Ascending aorta (tissue), 2 donors: ENCODE measurements at regions of chr11 and their contacts with region 1.

Region 1: DNA sequence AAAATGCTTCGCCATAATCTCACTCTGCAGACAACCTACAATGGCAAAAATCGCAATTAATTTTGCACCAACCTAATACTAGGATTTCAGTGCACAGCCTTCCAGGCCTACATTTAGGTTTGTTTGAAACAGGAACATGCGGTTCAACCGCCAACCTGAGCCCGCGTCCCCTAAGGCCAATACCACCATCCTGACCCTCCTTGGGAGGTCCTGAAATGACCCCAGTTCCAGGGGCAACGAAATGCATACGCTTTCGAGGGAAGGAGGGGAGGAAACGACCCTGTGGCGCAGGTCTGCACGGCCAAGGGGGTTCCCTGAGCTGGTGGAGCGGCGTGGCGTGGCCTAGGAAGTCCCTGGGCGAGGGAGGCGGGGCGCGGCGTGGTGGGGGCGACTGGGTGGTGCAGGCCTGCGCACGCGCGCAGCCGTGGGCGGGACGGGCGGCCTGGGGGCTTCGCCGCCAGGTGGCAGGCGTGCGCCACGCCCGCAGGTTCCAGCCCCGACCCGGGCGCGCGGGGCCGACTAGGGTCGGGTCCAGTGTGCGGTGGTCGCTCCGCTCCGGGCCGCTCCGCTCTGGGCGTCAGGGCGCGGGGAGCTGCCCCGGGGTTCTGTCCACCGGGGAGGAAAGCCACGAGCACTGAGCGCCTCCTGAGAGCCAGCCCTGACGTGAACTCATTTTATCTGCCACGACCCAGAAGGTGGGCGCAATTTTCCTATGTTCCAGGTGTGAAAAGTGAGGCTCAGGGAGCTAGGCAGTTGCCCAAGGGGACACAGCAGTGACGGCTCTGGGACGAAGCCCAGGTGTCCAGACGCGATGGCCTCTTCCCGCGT is 94.1 kb downstream of the SWAP70 start:
- DNase-seq: peak; percentile 50 to 91
- H3K4me3 ChIP-seq: peak overlapping the region; percentile 70 to 74
- H3K27ac ChIP-seq: peak overlapping the region; percentile 88 to 94
- H3K4me1 ChIP-seq: peaks cover 13 to 23% of the 10 kb centered on the region in 2 donors
- H3K27me3 ChIP-seq: no peaks in the 10 kb centered on the region
- CTCF ChIP-seq: peak in 2 of 3 experiments; percentile 51 to 99

Region 2: DNA sequence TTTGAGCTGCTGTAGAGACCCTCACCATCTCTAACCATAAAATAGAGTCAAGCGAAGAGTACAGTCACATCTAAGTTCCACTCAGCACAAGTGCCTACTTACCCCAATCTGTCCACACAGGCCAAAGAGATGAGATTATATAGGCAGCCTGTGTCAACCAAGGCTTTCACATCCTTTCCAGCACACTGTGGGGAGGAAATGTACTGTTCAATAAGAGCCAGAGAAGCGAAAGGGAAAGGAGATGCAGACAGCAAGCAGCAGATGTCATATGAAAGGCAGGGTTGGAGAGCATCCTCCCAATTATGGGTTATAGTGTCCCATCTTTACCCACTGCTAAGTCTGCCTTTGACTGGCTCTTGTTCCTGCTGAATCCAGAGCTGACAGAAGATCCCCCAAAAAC is 770.6 kb before region 1 on chr11:
- intact Hi-C with region 1: no loop called
- DNase-seq: no peak
- H3K4me3 ChIP-seq: no peak overlapping the region
- H3K27ac ChIP-seq: no peak overlapping the region
- H3K4me1 ChIP-seq: peaks cover 0 to 3% of the 10 kb centered on the region in 2 donors
- H3K27me3 ChIP-seq: no peaks in the 10 kb centered on the region
- CTCF ChIP-seq: no peak

Region 3: DNA sequence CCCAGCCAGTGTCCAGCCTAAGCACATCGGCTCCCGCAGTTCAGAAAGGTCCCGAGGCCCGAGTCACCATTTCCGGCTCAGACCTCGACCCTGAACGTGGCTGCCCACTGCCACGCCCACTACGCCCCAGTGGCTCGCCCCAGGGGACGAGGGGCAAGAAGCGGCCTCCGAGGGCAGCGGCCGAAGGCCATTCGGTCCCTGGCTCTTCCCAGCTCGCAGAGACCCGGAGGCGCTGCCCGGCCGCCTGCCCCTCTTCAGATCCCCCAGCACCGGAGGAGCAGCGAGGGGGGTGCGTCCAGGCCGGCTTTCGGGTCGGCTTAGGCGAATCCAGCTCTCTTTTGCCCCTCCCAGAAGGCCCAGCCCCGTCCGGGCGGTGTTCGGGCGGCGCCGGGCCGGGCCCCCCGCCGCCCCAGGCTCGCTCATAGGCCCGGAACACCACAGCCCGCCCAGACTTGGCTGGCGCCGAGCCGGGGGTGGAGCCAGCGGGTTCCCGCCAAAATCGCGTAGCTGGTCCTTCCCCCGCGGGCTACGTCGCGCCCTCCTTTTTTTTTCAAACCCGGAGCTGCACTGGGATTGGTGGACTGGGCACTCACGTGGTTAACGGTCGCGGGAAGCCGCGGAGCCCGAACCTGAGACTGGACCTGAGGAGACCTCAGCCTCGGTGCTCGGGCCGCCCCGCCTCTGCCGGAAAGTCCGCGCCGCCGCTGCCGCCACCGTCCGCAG is 184.8 kb before region 1 on chr11 and contains the start of gene WEE1:
- intact Hi-C with region 1: loop called (anchors 5 kb)
- DNase-seq: peak; percentile 95 to 99
- H3K4me3 ChIP-seq: peak within 1 kb of the TSS; percentile 89 to 98
- H3K27ac ChIP-seq: peak within 1 kb of the TSS; percentile 93 to 98
- H3K4me1 ChIP-seq: peaks cover 16 to 27% of the 10 kb centered on the region in 2 donors
- H3K27me3 ChIP-seq: no peaks in the 10 kb centered on the region
- CTCF ChIP-seq: no peak
- total RNA-seq, gene WEE1: 20.8 TPM

Region 4: GRCh38 chr11:9802291-9802861 is 44.4 kb after region 1 on chr11:
- intact Hi-C with region 1: loop called (anchors 1 kb)
- DNase-seq: no peak
- H3K4me3 ChIP-seq: no peak overlapping the region
- H3K27ac ChIP-seq: peak overlapping the region; percentile 54 to 76
- H3K4me1 ChIP-seq: peaks cover 3 to 40% of the 10 kb centered on the region in 2 donors
- H3K27me3 ChIP-seq: no peaks in the 10 kb centered on the region
- CTCF ChIP-seq: no peak

Region 5: GRCh38 chr11:9972989-9973388 is 215.0 kb after region 1 on chr11:
- intact Hi-C with region 1: loop called (anchors 1 kb)
- DNase-seq: no peak
- H3K4me3 ChIP-seq: no peak overlapping the region
- H3K27ac ChIP-seq: no peak overlapping the region
- H3K4me1 ChIP-seq: no peaks in the 10 kb centered on the region
- H3K27me3 ChIP-seq: no peaks in the 10 kb centered on the region
- CTCF ChIP-seq: peak; percentile 42 to 78 (median 64)

Region 6: GRCh38 chr11:10322830-10323792 is 565.1 kb after region 1 on chr11:
- intact Hi-C with region 1: loop called (anchors 2 kb)
- DNase-seq: peak in 1 of 2 donors; percentile 88
- H3K4me3 ChIP-seq: peak overlapping the region in 1 of 2 donors; percentile 33
- H3K27ac ChIP-seq: peak overlapping the region; percentile 79 to 86
- H3K4me1 ChIP-seq: peaks cover 10 to 55% of the 10 kb centered on the region in 2 donors
- H3K27me3 ChIP-seq: no peaks in the 10 kb centered on the region
- CTCF ChIP-seq: peak; percentile 42 to 57 (median 56)

Region 7: GRCh38 chr11:10366568-10367370 is 608.7 kb after region 1 on chr11:
- intact Hi-C with region 1: loop called (anchors 5 kb)
- DNase-seq: peak; percentile 43 to 90
- H3K4me3 ChIP-seq: no peak overlapping the region
- H3K27ac ChIP-seq: peak overlapping the region in 1 of 2 donors; percentile 40
- H3K4me1 ChIP-seq: no peaks in the 10 kb centered on the region
- H3K27me3 ChIP-seq: no peaks in the 10 kb centered on the region
- CTCF ChIP-seq: peak; percentile 79 to 92 (median 81)